HCT116 (cell line): ENCODE measurements at regions of chr1 and their contacts with region 1.

Region 1: GRCh38 chr1:111739194-111739924 is at the start of gene INKA2:
- DNase-seq: peak; percentile 74
- ATAC-seq: peak; percentile 88
- H3K4me3 ChIP-seq: peak within 1 kb of the TSS; percentile 53 to 59
- H3K27ac ChIP-seq: peak within 1 kb of the TSS; percentile 96
- H3K4me1 ChIP-seq: peaks cover 15 to 28% of the 10 kb centered on the region in 2 experiments; a peak in 3 of 4 replicates
- H3K27me3 ChIP-seq: peaks cover 4% of the 10 kb centered on the region; the same call in 1 of the 2 replicates
- CTCF ChIP-seq: no peak
- POLR2A ChIP-seq: peak; percentile 63
- RAD21 ChIP-seq: no peak
- total RNA-seq, gene INKA2: 4.0 TPM

Region 2: GRCh38 chr1:111516005-111516535 is 223.3 kb before region 1 on chr1:
- CTCF ChIA-PET with region 1: no interaction called
- POLR2A ChIA-PET with region 1: no interaction called
- RAD21 ChIA-PET with region 1: no interaction called
- intact Hi-C with region 1: no loop called
- DNase-seq: no peak
- ATAC-seq: peak; percentile 55
- H3K4me3 ChIP-seq: no peak overlapping the region
- H3K27ac ChIP-seq: no peak overlapping the region
- H3K4me1 ChIP-seq: no peaks in the 10 kb centered on the region
- H3K27me3 ChIP-seq: no peaks in the 10 kb centered on the region
- CTCF ChIP-seq: peak in 2 of 3 experiments; percentile 29 to 38; a peak in 4 of 6 replicates
- POLR2A ChIP-seq: no peak
- RAD21 ChIP-seq: no peak

Region 3: DNA sequence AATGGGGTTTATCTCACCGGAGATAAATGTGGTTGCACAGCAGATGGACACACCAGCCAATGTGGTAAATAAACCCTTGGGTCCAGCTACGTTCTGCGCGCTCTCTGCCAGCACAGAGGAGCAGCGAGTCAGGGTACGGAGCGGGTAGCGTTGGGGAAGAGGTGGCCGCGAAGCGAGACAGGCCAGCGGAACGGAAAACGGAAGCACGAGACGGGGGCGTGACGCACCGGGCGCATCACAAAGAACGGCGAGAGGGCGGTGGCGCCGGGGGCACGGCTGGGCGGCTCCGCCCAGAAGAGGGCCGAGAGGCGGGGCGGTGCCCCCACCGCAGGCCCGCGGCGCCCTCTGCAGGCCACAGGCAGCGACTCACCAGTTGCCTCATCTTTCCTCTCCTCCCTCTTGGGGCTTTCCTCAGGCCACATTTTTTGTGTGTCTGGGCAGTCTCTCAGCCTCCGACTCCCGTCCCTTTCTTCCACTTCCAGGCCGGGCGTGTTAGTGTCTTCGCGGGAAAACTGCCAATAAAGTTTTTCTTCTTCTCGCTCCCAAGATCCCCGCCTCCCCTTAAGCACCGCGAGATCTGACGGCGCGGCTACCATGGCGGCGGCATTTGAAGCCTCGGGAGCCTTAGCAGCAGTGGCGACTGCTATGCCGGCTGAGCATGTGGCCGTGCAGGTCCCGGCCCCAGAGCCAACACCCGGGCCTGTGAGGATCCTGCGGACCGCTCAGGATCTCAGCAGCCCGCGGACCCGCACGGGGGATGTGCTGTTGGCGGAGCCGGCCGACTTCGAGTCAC is 16.2 kb after region 1 on chr1 and contains the start of gene DDX20:
- CTCF ChIA-PET with region 1: interaction called, 5 read pairs
- POLR2A ChIA-PET with region 1: no interaction called
- RAD21 ChIA-PET with region 1: interaction called in 1 of 2 experiments, 4 read pairs
- intact Hi-C with region 1: loop called (anchors 1 kb)
- DNase-seq: peak; percentile 92
- ATAC-seq: peak; percentile 89
- H3K4me3 ChIP-seq: peak within 1 kb of the TSS; percentile 68 to 83
- H3K27ac ChIP-seq: peak within 1 kb of the TSS; percentile 89
- H3K4me1 ChIP-seq: peaks cover 11 to 18% of the 10 kb centered on the region in 2 experiments
- H3K27me3 ChIP-seq: no peaks in the 10 kb centered on the region
- CTCF ChIP-seq: peak; percentile 66 to 89 (median 85); a peak in 5 of 6 replicates
- POLR2A ChIP-seq: peak; percentile 70
- RAD21 ChIP-seq: peak; percentile 70
- total RNA-seq, gene DDX20: 14.9 TPM

Region 4: GRCh38 chr1:111827946-111828538 is 88.7 kb after region 1 on chr1:
- CTCF ChIA-PET with region 1: no interaction called
- POLR2A ChIA-PET with region 1: no interaction called
- RAD21 ChIA-PET with region 1: no interaction called
- intact Hi-C with region 1: no loop called
- DNase-seq: no peak
- ATAC-seq: no peak
- H3K4me3 ChIP-seq: no peak overlapping the region
- H3K27ac ChIP-seq: no peak overlapping the region
- H3K4me1 ChIP-seq: no peaks in the 10 kb centered on the region
- H3K27me3 ChIP-seq: peaks cover 65% of the 10 kb centered on the region
- CTCF ChIP-seq: no peak
- POLR2A ChIP-seq: no peak
- RAD21 ChIP-seq: no peak